ENCODE measurements at regions of chr11 and their contacts with region 1.

Region 1: GRCh38 chr11:27485930-27486773 is 13.6 kb upstream of the LGR4 start:
- DNase-seq: peak in 1 of 10 donors; percentile 32
- H3K4me3 ChIP-seq: no peak overlapping the region
- H3K27ac ChIP-seq: peak overlapping the region in 4 of 59 donors; percentile 5 to 41 (median 16)
- H3K27me3 ChIP-seq: no peaks in the 10 kb centered on the region
- CTCF ChIP-seq: peak; percentile 83 to 99 (median 91)

Region 2: DNA sequence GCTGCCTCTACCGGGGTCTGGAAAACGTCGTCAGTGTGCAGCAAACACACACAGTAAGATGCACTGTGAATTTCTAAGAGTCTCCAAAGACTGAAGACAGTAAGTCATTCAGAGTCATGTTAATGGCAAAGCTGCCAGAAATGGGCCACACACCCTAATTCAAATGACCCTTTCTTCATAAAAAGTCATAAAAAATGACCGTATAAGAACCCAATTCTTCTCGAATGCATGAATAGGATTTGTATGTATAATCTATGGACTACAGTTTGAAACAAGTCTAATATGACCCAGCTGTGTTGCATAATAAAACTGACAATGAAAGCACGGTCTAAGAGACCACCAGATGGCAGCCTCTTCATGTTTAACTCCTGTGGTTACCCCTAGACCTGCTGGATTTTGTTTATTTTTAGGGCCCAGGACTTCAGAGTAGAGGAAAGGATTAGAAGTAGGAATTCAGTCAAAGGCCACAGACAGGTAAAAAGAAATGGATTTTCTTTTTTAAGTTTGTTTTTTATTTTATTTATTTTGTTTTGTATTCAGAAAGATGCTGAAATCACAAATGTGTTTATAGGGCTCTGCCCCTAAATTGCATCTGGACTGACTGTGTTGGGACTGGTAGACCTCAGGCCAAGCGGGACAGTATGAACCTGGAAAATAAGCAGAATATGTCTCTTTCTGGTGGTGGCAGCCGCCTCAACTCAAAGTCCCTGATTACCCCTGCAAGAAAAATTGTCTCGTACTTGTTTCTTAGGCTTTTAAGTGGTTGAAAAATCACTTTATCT is 732.2 kb before region 1 on chr11:
- intact Hi-C with region 1: loop called in 1 of 2 experiments (anchors 10 kb)
- DNase-seq: peak in 5 of 10 donors; percentile 8 to 69 (median 58)
- H3K4me3 ChIP-seq: no peak overlapping the region
- H3K27ac ChIP-seq: peak overlapping the region in 2 of 59 donors; percentile 3 to 7
- H3K27me3 ChIP-seq: no peaks in the 10 kb centered on the region
- CTCF ChIP-seq: peak; percentile 50 to 88 (median 73)

Region 3: DNA sequence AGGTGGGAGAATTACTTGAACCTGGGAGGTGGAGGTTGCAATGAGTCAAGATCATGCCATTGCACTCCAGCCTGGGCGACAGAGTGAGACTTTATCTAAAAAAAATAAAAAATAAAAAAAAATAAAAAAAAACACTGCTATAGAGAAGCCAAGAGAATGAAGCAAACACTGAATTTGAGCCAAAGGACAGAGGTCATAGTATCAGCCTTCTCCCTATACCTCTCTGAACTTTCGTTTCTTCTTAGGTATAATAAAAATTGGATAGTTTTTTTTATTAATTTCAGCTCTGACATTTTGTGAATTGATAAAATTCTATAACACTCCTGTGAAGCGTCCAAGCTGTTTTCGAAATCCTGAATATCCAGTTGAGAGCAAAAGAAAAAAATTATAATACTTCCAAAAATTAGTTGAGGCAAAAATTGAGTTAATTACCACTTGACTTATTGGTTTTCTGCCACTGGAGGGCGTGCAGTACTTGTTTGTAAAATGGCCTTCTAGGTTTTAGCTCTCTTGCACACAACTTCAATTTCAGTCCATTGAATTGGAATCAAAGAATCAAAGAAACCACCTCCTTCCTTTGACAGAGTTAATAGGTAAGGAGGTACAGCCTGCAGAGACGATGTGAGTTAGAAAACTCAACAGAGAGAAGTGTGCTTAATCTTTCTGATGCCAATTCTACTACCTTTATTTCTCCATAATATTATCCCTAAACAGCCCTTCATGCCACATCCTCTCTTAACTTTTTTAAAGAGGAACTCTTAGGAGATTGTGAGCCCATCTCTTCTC is 302.3 kb before region 1 on chr11:
- intact Hi-C with region 1: loop called (anchors 2 kb)
- DNase-seq: peak in 5 of 10 donors; percentile 34 to 67 (median 41)
- H3K4me3 ChIP-seq: no peak overlapping the region
- H3K27ac ChIP-seq: no peak overlapping the region
- H3K27me3 ChIP-seq: peaks cover 0 to 5% (median 0%) of the 10 kb centered on the region in 45 donors
- CTCF ChIP-seq: peak; percentile 58 to 95 (median 79)

Region 4: GRCh38 chr11:27740362-27741024 is 254.3 kb after region 1 on chr11:
- intact Hi-C with region 1: no loop called
- DNase-seq: no peak
- H3K4me3 ChIP-seq: no peak overlapping the region
- H3K27ac ChIP-seq: no peak overlapping the region
- H3K27me3 ChIP-seq: peaks cover 0 to 37% (median 6%) of the 10 kb centered on the region in 45 donors
- CTCF ChIP-seq: no peak

Region 5: DNA sequence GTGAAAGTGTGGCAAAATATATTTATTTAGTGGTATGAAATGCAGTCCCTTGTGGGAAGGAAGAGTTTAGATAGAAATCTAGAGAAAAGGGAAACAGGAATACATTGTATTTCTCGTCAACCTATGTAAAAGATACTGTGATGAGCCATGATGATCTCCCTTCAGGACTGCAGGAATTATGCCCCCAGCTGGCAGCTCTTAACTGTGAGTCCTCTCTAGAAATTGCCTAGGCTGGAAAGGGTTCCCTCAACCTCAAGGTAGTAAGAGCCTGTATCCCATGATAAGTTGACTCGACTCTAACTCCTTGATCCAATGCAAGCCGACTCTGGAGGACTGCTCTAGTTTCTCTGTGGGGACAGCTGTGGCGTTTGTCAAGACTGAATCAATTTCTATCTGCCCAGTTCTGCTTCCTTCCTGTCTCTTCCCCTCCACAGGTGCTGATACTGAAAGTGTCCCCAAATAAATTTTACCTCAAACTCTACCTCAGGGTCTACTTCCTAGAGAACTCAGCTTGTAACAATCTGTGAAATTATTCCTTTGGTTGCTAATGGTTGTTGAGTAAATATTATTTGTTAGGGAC is 1519.3 kb after region 1 on chr11:
- intact Hi-C with region 1: no loop called
- DNase-seq: no peak
- H3K4me3 ChIP-seq: no peak overlapping the region
- H3K27ac ChIP-seq: no peak overlapping the region
- H3K27me3 ChIP-seq: no peaks in the 10 kb centered on the region
- CTCF ChIP-seq: no peak